Left ventricle myocardium superior (tissue), 1 donor: ENCODE measurements at regions of chr3 and their contacts with region 1.

Region 1: DNA sequence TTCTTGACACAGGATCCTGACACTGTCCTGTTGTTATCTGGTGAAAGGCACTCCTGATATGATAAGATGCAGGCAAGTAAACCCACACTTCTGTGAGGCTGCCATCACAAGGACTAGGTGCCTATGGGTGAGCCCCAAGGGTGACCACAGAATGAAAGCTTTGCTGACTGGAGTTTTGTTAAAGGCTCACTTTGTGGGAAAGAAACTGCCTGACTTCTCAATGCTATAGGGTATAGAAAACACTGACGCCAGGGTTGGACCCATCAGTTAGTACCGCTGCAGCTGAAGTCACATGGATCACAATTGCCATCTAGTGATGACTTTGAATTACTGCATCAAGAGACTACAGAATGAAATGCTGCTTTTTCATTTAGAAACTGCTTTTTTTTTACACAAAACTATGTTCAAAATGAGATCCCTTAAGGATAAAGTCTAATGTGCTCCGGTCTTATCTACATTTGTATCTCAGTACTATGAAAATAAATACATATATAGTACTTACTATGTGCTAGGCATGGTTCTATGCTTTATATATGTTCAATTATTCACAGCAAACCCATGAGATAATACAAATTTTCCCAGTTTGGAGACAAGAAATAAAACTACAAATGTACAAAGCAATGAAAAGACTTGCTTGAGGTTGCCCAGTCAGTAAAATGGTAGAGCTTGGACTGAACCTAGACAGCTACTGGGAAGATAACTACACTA is 64.2 kb upstream of the CMSS1 start:
- DNase-seq: no peak
- ATAC-seq: peak; percentile 83

Region 2: DNA sequence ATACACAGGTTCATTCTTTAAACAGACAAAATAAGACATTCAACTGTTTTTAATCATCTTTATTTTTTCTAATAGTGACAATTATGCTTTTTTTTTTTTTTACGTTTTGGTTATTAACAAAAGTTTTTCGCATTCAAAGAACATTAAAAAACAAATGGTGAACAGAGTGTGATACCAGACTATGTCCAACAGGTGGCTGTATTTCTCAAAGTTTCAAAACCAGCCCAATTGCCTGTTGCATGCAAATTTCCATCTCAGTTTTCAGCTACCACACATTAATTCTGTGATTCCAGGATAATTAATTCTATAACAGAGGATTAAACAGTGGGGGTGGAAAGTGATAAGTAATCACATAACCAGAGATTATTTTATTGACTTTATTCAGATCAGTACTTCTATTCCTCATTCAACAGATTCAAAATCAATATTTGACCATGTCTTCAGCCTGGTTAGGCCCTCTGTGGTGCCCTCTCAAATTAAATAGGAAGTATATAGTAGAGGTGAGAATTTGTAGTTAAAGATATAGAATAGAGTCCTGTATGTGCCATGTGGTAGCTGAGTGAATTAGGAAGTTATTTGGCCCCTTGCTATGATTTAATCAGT is 729.7 kb before region 1 on chr3:
- intact Hi-C with region 1: loop called (anchors 10 kb)
- DNase-seq: no peak
- ATAC-seq: no peak

Region 3: GRCh38 chr3:99499235-99500158 is 253.9 kb before region 1 on chr3:
- intact Hi-C with region 1: loop called (anchors 10 kb)
- DNase-seq: peak; percentile 33
- ATAC-seq: peak; percentile 70

Region 4: DNA sequence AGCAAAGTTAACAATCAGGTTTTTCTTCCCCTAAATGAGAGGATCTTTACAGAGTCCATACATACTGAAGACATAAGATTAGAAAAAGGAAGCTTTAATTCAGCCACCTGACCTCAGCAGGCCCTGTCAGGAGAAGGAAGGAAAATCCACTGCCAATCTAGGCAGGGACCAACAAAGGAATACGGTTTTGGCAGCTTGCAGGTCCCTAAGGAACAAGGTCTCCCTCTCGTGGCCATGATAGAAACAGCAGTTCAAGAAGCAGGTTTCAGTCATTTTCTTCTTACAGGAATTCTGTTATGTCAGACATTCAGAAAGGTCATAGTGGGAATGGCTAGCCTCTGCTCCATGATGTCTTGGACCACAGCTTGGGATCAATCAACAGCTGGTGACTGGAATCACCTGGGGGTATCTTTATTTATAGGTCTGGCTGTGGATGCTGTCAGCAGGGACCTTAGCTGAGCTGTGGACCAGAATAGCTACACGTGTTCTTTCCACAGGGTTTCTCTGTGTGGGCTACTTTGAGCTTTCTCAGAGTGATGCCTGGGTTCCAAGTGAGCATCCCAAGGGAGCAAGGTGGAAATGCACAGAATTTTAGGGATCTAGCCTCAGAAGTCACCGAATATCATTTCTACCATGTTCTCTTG is 54.9 kb after region 1 on chr3:
- intact Hi-C with region 1: no loop called
- DNase-seq: no peak
- ATAC-seq: peak; percentile 47

Region 5: DNA sequence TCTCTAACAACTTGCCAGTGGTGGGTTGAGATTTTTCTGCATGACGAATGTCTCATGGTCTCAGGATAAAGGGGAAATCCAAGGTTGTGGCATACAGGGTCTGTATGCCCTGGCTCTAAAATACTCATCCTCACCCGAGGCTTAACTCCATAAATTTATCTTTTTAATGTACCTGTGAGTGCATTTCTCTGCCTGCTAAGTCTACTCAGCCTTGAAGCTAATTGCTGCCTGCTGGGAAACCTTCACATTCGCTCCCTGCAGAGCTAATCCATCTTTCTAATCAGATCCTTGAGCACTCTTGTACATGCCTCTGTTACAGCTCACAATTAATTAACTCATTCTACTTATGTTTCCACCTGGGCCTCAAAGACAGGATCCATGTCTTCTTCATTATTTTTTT is 158.0 kb after region 1 on chr3:
- intact Hi-C with region 1: no loop called
- DNase-seq: no peak
- ATAC-seq: no peak

Region 6: GRCh38 chr3:100009276-100010086 is 256.1 kb after region 1 on chr3:
- intact Hi-C with region 1: no loop called
- DNase-seq: no peak
- ATAC-seq: no peak

Region 7: GRCh38 chr3:100299016-100299415 is 545.6 kb after region 1 on chr3:
- intact Hi-C with region 1: no loop called
- DNase-seq: no peak
- ATAC-seq: no peak